ENCODE measurements at regions of chr15 and their contacts with region 1.

Region 1: GRCh38 chr15:67531379-67532059 is 10.6 kb downstream of the C15orf61 start:
- DNase-seq: no peak
- CTCF ChIP-seq: no peak

Region 2: GRCh38 chr15:67593562-67593961 is 62.0 kb after region 1 on chr15:
- in situ Hi-C with region 1: loop called (anchors 10 kb)
- DNase-seq: no peak
- CTCF ChIP-seq: no peak

Measured in GM13976 (cell line).